ENCODE measurements at regions of chr21 and their contacts with region 1.

Region 1: DNA sequence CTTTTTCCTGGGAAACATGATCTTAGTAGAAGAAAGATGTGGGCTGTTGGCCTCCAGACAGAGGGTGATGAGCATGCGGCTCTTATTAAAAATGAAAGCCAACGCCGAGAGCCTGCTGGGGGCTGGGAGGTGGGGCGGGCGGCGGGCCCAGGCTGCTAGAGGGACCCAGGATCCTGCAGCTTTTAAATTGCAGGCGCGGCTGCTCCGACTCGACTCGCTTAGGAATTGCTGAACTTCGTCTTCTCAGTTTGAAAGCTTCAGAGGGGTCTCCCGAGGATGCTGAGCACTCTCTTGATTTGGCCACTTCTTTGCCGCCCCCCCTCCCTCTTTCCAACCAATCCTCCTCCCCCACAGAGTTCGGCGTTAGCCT is 1.2 kb downstream of the AGPAT3 start:
- DNase-seq: no peak
- ATAC-seq: peak; percentile 49
- H3K4me3 ChIP-seq: peak overlapping the region; percentile 55 to 58
- H3K27ac ChIP-seq: peak overlapping the region; percentile 70
- H3K4me1 ChIP-seq: peaks cover 16% of the 10 kb centered on the region
- H3K27me3 ChIP-seq: no peaks in the 10 kb centered on the region
- CTCF ChIP-seq: no peak

Region 2: DNA sequence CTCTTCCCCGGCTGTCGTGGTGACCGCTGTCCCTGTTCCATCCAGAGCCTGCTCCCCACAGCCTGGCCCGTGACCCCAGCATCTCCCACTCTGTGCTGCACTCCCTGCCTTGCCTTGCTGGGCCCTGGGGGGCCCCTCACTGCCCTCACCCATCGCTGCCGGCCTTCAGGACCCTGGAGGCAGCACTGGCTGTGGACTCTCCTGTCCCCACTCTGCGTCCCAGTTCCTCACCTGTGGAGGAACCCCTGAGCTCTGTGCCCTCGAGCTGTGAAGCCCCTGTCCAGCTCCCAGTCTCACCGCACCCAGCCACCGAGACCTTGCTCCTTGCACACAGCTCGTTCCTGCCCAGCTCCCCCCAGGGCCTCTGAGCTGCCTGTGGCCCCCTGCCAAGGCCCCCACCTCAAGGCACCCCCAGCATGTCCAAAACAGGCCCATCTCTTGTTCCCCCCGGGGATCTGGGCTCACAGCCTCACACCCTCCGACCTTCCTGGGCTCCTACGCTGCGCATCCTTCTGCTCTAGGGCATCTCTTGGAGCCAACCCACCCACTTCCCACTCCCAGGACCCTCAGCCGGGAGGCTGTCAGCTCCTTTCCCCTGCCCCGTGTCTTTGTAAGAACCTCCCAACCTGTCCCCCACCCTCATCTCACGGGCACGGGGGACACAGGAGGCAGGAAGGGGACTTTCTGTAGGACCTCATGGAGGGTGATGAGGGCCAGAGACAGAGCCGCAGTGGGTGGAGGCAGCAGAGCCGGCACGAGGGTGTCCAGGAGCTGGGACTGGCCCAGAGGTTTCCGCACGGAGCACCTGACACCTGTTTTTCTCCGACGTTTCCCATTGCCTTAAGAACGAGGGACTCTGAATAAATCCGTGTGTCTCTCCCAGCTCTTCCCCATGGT is 1096.2 kb before region 1 on chr21:
- CTCF ChIA-PET with region 1: no interaction called
- POLR2A ChIA-PET with region 1: interaction called, 23 read pairs
- in situ Hi-C with region 1: no loop called
- intact Hi-C with region 1: no loop called
- DNase-seq: no peak
- ATAC-seq: no peak
- H3K4me3 ChIP-seq: no peak overlapping the region
- H3K27ac ChIP-seq: no peak overlapping the region
- H3K4me1 ChIP-seq: no peaks in the 10 kb centered on the region
- H3K27me3 ChIP-seq: no peaks in the 10 kb centered on the region; the same call in 1 of the 2 replicates
- CTCF ChIP-seq: no peak

Region 3: GRCh38 chr21:43270800-43271301 is 595.4 kb before region 1 on chr21:
- CTCF ChIA-PET with region 1: no interaction called
- POLR2A ChIA-PET with region 1: interaction called, 11 read pairs
- in situ Hi-C with region 1: no loop called
- intact Hi-C with region 1: no loop called
- DNase-seq: no peak
- ATAC-seq: no peak
- H3K4me3 ChIP-seq: no peak overlapping the region
- H3K27ac ChIP-seq: no peak overlapping the region
- H3K4me1 ChIP-seq: no peaks in the 10 kb centered on the region
- H3K27me3 ChIP-seq: no peaks in the 10 kb centered on the region
- CTCF ChIP-seq: no peak

Region 4: DNA sequence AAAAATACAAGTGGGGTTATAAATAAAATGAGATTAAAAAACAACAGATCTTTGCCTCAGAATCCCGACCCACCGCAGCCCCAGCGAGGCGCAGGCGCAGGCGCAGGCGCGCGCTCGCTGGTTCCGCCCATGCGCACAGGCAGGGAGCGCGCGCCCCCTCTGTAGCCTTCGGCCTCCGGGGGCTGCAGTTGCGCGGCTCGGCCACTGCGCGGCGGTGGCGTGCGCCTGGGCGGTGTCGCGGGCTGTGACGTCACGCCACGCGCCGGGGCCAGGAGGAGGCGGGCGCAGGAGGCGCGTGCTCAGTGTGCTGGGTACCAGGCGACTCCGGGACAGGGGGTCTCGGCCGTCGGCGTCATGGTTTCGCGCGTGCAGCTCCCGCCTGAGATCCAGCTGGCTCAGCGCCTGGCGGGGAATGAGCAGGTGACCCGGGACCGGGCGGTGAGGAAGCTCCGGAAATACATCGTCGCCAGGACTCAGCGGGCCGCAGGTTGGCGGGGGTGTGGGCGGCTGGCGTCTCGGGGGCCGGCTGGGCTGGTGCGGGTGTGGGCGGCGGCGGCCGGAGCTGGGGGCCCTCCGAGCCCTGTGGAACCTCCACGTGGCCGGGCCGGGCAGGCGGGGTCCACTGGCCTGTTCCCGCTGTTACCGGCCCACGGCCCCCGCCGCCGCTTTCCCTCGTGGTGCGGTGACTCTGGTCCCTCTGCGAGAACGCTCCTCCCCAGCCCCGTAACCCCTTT is 76.8 kb before region 1 on chr21 and contains the start of gene RRP1:
- CTCF ChIA-PET with region 1: no interaction called
- POLR2A ChIA-PET with region 1: no interaction called
- in situ Hi-C with region 1: no loop called
- intact Hi-C with region 1: no loop called
- DNase-seq: peak; percentile 22
- ATAC-seq: peak; percentile 95
- H3K4me3 ChIP-seq: peak within 1 kb of the TSS; percentile 76 to 93
- H3K27ac ChIP-seq: peak within 1 kb of the TSS; percentile 84
- H3K4me1 ChIP-seq: 0 out of 2 replicates have a peak, but pooled peaks cover 6% of the 10 kb centered on the region
- H3K27me3 ChIP-seq: no peaks in the 10 kb centered on the region
- CTCF ChIP-seq: peak; percentile 99
- total RNA-seq, gene RRP1: 41.8 TPM

Region 5: GRCh38 chr21:43909741-43910486 is 43.7 kb after region 1 on chr21:
- CTCF ChIA-PET with region 1: no interaction called
- POLR2A ChIA-PET with region 1: no interaction called
- in situ Hi-C with region 1: loop called (anchors 5 kb)
- intact Hi-C with region 1: no loop called
- DNase-seq: no peak
- ATAC-seq: no peak
- H3K4me3 ChIP-seq: no peak overlapping the region
- H3K27ac ChIP-seq: no peak overlapping the region
- H3K4me1 ChIP-seq: no peaks in the 10 kb centered on the region
- H3K27me3 ChIP-seq: no peaks in the 10 kb centered on the region
- CTCF ChIP-seq: no peak

Region 6: DNA sequence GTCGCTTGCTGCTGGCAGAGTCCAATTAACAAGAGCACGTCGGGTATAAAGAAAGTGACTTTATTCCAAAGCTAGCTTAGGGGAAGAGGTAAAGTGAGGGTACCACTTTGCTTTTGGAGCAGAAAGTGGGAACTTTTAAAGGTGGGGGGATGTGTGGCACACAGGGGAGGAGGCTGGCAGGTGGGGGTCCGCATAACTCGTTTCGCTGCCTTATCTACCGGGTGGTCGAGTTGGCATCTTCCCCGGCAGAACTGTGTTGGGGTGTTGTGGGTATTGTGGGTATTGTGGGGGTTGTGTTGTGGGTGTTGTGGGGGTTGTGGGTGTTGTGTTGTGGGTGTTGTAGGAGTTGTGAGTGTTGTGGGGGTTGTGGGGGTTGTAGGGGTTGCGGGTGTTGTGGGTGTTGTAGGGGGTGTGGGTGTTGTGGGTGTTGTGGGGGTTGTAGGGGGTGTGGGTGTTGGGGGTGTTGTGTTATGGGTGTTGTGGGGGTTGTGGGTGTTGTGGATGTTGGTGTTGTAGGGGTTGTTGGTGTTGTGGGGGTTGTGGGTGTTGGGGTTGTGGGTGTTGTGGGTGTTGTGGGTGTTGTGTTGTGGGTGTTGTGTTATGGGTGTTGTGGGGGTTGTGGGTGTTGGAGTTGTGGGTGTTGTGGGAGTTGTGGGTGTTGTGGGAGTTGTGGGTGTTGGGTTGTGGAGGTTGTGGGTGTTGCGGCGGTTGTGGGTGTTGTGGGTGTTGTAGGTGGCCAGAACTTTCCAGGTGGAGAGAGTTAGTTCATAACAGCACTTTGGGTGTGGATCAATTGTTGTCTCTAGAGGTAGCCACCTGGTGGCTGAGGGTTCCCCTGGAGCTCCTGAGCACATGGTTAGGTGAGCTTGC is 51.5 kb after region 1 on chr21:
- CTCF ChIA-PET with region 1: interaction called, 25 read pairs
- POLR2A ChIA-PET with region 1: no interaction called
- in situ Hi-C with region 1: no loop called
- intact Hi-C with region 1: no loop called
- DNase-seq: peak; percentile 5
- ATAC-seq: no peak
- H3K4me3 ChIP-seq: no peak overlapping the region
- H3K27ac ChIP-seq: no peak overlapping the region
- H3K4me1 ChIP-seq: no peaks in the 10 kb centered on the region
- H3K27me3 ChIP-seq: no peaks in the 10 kb centered on the region
- CTCF ChIP-seq: no peak

Region 7: DNA sequence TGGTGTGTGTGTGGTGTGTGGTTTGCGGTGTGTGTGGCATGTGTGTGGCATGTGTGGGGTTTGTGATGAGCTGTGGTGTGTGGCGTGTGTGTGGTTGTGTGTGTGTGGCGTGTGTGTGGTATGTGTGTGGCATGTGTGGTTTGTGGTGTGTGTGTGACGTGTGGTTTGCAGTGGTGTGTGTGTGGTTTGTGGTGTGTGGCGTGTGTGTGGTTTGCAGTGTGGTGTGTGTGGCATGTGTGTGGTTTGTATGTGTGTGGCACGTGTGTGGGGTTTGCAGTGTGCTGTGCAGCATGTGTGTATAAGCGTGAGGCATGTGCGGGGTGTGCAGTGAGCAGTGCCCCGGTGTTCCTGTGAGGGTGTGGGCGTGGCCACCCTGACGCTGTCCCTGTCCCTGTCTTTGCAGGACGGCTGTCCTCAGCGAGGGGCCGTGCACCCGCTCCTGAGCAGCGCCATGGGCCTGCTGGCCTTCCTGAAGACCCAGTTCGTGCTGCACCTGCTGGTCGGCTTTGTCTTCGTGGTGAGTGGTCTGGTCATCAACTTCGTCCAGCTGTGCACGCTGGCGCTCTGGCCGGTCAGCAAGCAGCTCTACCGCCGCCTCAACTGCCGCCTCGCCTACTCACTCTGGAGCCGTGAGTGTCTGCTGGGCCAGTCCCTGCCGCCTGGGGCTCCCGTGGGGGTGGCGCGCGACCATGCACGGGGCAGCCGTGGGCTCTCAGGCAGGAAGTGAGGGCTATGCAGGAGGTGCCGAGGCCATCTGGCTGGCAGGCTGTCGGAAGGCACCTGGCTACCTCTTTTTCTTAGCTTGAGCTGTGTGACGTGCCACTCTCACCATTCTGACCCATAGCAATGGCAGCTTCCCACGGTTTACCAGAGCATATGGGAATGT is 93.2 kb after region 1 on chr21:
- CTCF ChIA-PET with region 1: interaction called, 10 read pairs
- POLR2A ChIA-PET with region 1: no interaction called
- in situ Hi-C with region 1: no loop called
- intact Hi-C with region 1: no loop called
- DNase-seq: no peak
- ATAC-seq: no peak
- H3K4me3 ChIP-seq: no peak overlapping the region
- H3K27ac ChIP-seq: no peak overlapping the region
- H3K4me1 ChIP-seq: no peaks in the 10 kb centered on the region; the same call in 1 of the 2 replicates
- H3K27me3 ChIP-seq: no peaks in the 10 kb centered on the region
- CTCF ChIP-seq: no peak

Region 8: DNA sequence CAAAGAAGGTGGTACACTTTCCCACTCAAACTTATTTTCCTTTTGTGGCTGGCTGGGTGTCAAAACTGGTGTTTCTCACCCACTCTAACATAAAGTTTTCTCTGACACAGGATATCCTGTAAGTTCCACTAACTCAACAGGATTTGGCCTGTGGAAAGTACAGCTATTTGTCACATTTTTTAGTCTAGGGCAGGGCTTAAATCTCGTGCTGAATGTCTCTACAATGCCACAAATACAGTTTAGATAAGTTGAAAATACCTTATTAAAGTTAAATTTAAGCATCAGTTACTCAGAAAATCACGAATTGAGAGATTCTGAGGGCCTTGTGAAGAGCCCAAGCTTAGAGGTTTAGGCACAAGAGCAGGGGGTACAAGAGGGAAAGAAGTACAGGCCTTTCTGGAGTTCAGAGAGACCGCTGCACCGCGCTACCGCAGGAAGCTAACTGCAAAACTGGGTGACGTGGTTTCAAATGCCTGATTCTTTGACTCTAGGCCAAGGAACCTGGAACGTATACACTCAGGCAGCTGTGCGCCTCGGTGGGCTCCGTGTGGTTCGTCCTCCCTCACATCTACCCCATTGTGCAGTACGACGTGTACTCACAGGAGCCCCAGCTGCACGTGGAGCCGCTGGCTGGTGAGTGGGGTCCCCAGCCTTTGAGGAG is 217.5 kb after region 1 on chr21:
- CTCF ChIA-PET with region 1: no interaction called
- POLR2A ChIA-PET with region 1: interaction called, 11 read pairs
- in situ Hi-C with region 1: no loop called
- intact Hi-C with region 1: no loop called
- DNase-seq: no peak
- ATAC-seq: no peak
- H3K4me3 ChIP-seq: no peak overlapping the region
- H3K27ac ChIP-seq: no peak overlapping the region
- H3K4me1 ChIP-seq: no peaks in the 10 kb centered on the region
- H3K27me3 ChIP-seq: no peaks in the 10 kb centered on the region
- CTCF ChIP-seq: no peak

Region 9: DNA sequence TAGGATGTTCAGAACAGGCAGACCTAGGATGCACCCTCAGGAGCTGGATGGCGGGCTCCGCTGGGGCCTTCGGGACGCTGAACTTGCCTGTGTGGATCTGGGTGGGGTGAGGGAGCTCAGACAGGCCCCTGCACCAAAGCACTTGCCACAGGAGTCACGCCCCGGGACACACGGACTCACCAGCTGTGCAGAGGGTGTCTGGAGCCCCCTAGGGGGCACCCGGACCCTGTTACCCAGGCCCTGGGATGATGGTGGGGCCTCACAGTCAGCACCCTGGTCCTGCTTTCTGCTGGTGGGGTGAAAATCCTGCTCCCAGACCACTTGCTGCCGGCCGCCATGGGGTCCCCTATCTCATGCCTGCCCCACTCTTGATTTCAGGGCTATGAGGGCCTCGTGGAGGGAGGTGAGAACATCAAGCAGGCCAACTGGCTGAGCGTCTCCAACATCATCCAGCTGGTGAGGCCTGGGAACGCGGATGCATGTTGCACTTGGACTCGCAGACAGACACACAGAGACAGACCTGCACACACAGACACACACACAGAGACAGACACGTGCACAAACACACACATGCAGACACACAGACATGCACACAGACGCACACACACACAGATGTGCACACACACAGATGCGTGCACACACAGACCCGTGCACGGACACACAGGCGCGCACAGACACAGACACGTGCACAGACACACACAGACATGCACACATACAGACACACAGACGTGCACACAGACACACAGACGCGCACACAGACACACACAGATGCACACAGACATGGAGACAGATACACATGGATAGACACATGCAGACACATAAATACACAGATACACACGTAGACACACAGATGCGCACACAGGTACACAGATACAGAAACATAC is 444.6 kb after region 1 on chr21:
- CTCF ChIA-PET with region 1: no interaction called
- POLR2A ChIA-PET with region 1: no interaction called
- in situ Hi-C with region 1: no loop called
- intact Hi-C with region 1: no loop called
- DNase-seq: no peak
- ATAC-seq: no peak
- H3K4me3 ChIP-seq: no peak overlapping the region
- H3K27ac ChIP-seq: no peak overlapping the region
- H3K4me1 ChIP-seq: no peaks in the 10 kb centered on the region
- H3K27me3 ChIP-seq: no peaks in the 10 kb centered on the region
- CTCF ChIP-seq: no peak

Measured in Panc1 (cell line).